GM12878 (cell line): ENCODE measurements at regions of chr14 and their contacts with region 1.

Region 1: GRCh38 chr14:95683793-95684192 is 2.4 kb upstream of the TCL1B start:
- DNase-seq: no peak
- ATAC-seq: peak; percentile 94
- H3K4me3 ChIP-seq: no peak overlapping the region
- H3K27ac ChIP-seq: no peak overlapping the region
- H3K4me1 ChIP-seq: peaks cover 8% of the 10 kb centered on the region
- H3K27me3 ChIP-seq: no peaks in the 10 kb centered on the region; a peak in 1 of 4 replicates
- CTCF ChIP-seq: peak; percentile 90 to 99 (median 97)
- EP300 ChIP-seq: no peak
- POLR2A ChIP-seq: no peak
- RAD21 ChIP-seq: peak; percentile 95

Region 2: DNA sequence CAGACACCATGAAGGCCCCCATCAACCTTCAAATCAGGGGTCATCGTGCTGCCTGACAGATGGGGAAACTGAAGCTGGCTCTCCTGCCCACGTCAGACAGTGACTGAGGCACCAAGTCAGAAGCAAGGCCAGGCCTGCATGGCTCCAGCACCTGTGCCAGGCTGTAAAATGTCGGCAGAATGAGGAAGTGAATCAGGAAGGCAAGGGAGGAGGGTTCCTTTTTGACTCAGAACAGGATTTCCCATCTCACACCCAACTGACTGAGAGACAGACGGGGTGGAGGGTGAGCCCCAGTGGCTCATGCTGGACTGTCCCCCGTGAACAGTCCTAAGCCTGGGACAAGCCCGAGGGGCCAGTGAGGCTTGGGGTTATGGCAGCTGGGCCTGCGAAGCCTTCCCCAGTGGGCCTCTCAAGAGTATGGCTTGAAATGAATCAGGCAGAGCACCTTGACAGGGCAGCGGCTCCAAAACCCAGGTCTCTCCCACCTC is 188.2 kb before region 1 on chr14:
- CTCF ChIA-PET with region 1: no interaction called
- POLR2A ChIA-PET with region 1: no interaction called
- RAD21 ChIA-PET with region 1: no interaction called
- SMC1A ChIA-PET with region 1: no interaction called
- in situ Hi-C with region 1: no loop called
- intact Hi-C with region 1: no loop called
- DNase-seq: peak; percentile 94
- ATAC-seq: peak; percentile 90
- H3K4me3 ChIP-seq: peak overlapping the region; percentile 37; the same call in 1 of the 2 replicates
- H3K27ac ChIP-seq: peak overlapping the region; percentile 98
- H3K4me1 ChIP-seq: peaks cover 60% of the 10 kb centered on the region
- H3K27me3 ChIP-seq: no peaks in the 10 kb centered on the region
- CTCF ChIP-seq: no peak
- EP300 ChIP-seq: peak; percentile 66 to 95
- POLR2A ChIP-seq: peak; percentile 66
- RAD21 ChIP-seq: peak; percentile 17; the same call in 1 of the 2 replicates

Region 3: GRCh38 chr14:95609387-95609990 is 74.3 kb before region 1 on chr14:
- CTCF ChIA-PET with region 1: interaction called, 145 read pairs
- POLR2A ChIA-PET with region 1: no interaction called
- RAD21 ChIA-PET with region 1: interaction called, 17 read pairs
- SMC1A ChIA-PET with region 1: interaction called, 52 read pairs
- in situ Hi-C with region 1: loop called (anchors 5 kb)
- intact Hi-C with region 1: loop called (anchors 1 kb)
- DNase-seq: no peak
- ATAC-seq: peak; percentile 83
- H3K4me3 ChIP-seq: no peak overlapping the region
- H3K27ac ChIP-seq: no peak overlapping the region
- H3K4me1 ChIP-seq: no peaks in the 10 kb centered on the region
- H3K27me3 ChIP-seq: no peaks in the 10 kb centered on the region; a peak in 1 of 4 replicates
- CTCF ChIP-seq: peak; percentile 67 to 71 (median 68)
- EP300 ChIP-seq: no peak
- POLR2A ChIP-seq: no peak
- RAD21 ChIP-seq: peak; percentile 84

Region 4: GRCh38 chr14:95668235-95668772 is 15.5 kb before region 1 on chr14:
- CTCF ChIA-PET with region 1: interaction called, 98 read pairs
- POLR2A ChIA-PET with region 1: interaction called, 3 read pairs
- RAD21 ChIA-PET with region 1: interaction called, 44 read pairs
- SMC1A ChIA-PET with region 1: interaction called, 78 read pairs
- in situ Hi-C with region 1: no loop called
- intact Hi-C with region 1: no loop called
- DNase-seq: peak; percentile 51
- ATAC-seq: no peak
- H3K4me3 ChIP-seq: no peak overlapping the region
- H3K27ac ChIP-seq: peak overlapping the region; percentile 9
- H3K4me1 ChIP-seq: peaks cover 56% of the 10 kb centered on the region
- H3K27me3 ChIP-seq: no peaks in the 10 kb centered on the region
- CTCF ChIP-seq: no peak
- EP300 ChIP-seq: no peak
- POLR2A ChIP-seq: no peak
- RAD21 ChIP-seq: no peak

Region 5: DNA sequence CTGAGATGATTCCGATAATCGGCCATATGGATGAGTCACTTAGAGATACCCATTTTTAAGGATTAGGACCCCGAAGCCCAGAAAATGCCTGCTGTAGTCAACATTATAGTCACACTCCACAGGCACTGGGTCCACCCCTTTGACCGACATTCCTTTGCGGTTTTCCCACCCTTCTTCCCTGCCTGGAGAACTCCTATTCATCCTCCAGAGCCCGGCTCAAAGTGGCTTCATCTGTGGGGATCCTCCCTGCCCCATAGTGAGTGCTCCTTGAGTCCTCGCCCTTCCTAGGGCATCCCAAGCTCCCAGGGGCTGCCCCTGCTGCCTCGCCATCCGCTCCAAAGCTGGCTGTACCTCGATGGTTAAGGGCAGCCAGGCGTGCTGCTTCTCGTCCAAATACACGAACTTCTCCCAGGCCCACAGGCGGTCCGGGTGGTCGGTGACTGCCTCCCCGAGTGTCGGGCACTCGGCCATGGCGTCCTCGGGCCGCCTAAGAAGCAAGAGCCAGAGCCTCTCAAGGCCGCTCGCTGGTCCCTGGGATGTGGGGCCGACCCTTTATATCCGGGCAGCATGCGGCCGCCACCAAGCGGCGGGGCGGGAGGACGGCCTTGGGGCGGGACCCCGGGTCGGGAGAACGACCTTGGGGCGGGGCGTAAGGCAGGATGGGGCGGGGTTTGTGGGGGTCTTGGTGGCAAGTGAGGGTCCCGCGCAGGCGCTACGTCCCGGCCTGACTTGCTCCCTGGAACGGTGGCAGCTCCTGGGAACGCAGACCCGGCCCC is 30.0 kb after region 1 on chr14 and contains the start of gene TCL1A:
- CTCF ChIA-PET with region 1: interaction called, 21 read pairs
- POLR2A ChIA-PET with region 1: interaction called, 3 read pairs
- RAD21 ChIA-PET with region 1: interaction called, 3 read pairs
- SMC1A ChIA-PET with region 1: interaction called, 5 read pairs
- in situ Hi-C with region 1: no loop called
- intact Hi-C with region 1: no loop called
- DNase-seq: no peak
- ATAC-seq: peak; percentile 95
- H3K4me3 ChIP-seq: peak within 1 kb of the TSS; percentile 84
- H3K27ac ChIP-seq: peak within 1 kb of the TSS; percentile 85
- H3K4me1 ChIP-seq: peaks cover 13% of the 10 kb centered on the region
- H3K27me3 ChIP-seq: no peaks in the 10 kb centered on the region
- CTCF ChIP-seq: peak; percentile 50 to 58 (median 58)
- EP300 ChIP-seq: no peak
- POLR2A ChIP-seq: peak; percentile 100
- RAD21 ChIP-seq: peak; percentile 69
- polyA plus RNA-seq, gene TCL1A: 36.5 to 51.6 TPM

Region 6: DNA sequence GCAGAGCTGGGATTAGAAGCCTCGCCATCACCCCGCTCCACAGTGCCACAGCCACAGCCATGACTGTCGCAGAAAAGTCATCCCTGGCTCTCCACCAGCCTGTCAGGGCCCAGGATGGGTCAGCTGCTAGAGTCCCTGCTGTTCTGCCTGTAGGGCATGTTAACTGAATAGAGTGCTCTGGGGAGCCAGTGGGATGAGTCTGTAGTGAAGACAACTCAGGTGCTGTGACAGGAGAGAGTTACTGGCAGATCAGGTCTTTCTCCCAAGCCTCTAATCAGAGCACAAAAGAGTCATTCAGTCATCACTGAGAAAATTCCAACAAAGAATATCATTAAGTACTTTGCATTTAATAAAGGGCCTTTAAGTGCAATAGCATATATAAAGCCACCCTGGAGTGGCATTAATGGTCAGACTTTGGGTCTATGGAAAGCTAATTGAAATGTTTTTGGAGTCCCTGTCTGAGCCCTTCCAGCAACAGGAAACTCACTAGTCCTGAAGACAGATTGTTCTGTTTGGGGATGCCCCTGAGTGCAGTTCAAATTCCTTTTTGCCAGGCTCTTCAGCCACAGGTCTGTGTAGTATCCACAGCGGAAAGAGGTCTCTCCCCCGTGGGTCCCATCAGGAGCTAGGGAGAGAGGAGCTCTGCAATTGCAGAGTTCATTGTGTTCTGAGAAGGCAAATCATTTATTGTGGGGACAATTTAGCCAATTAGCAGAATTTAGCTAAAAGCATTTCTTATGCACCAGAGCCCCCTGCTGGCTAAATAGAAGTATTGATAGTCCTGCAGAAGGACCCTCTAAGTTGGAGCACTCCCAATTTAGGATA is 310.2 kb after region 1 on chr14:
- CTCF ChIA-PET with region 1: interaction called, 6 read pairs
- POLR2A ChIA-PET with region 1: no interaction called
- RAD21 ChIA-PET with region 1: interaction called, 4 read pairs
- SMC1A ChIA-PET with region 1: no interaction called
- in situ Hi-C with region 1: loop called (anchors 10 kb)
- intact Hi-C with region 1: loop called (anchors 2 kb)
- DNase-seq: peak; percentile 17
- ATAC-seq: peak; percentile 75
- H3K4me3 ChIP-seq: no peak overlapping the region
- H3K27ac ChIP-seq: no peak overlapping the region
- H3K4me1 ChIP-seq: no peaks in the 10 kb centered on the region
- H3K27me3 ChIP-seq: peaks cover 0 to 2% of the 10 kb centered on the region in 2 experiments; a peak in 2 of 4 replicates
- CTCF ChIP-seq: peak; percentile 78 to 80 (median 79)
- EP300 ChIP-seq: no peak
- POLR2A ChIP-seq: no peak
- RAD21 ChIP-seq: peak; percentile 93